Mammary epithelial cell (primary cell): ENCODE measurements at regions of chr5 and their contacts with region 1.

Region 1: GRCh38 chr5:42889311-42889933 is 77.7 kb upstream of the SELENOP start:
- DNase-seq: peak; percentile 65
- H3K4me3 ChIP-seq: no peak overlapping the region
- H3K27ac ChIP-seq: no peak overlapping the region
- H3K4me1 ChIP-seq: no peaks in the 10 kb centered on the region
- H3K27me3 ChIP-seq: no peaks in the 10 kb centered on the region
- CTCF ChIP-seq: peak; percentile 94 to 96

Region 2: DNA sequence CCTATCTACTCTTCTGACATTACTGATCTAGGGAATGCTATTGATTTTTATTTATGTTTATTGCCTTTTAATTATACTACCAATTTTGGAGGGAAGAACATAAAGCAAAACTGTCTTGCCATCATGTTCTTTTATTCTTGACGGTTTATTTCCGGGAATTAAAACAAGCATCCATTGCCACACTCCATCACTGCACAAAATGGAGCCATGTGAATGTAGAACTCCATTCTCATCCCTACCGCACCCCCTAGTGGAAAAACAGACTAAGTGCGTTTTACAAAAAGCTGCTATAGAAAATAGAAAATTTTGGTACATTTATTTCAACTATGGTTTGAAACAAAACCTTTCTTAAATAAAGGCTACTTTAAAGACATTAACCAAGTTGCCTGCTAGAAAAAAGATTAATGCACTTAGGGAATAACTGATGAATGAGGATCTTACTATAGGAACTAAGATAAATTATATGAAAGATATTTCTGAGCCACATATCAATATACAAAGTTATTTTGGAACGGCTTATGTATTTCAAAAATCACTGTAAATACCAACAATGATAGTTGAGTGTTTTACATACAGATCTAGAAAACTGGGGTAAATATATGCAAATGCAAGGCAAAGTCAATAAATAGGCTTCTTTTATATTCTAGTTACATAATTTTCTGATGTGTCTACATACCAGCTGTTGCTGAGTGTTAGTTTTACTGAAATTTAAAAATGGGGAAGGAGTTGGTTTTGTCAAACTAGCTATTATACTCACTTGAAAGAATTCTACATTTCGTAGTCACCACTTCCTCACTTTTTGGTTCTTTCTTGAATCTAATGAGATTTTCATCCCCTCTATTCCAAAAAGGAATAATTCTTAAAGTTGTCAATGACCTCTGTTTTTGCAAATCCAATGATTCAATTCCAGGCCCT is 1045.7 kb before region 1 on chr5:
- CTCF ChIA-PET with region 1: interaction called, 12 read pairs
- dilution Hi-C with region 1: no loop called
- in situ Hi-C with region 1: no loop called
- intact Hi-C with region 1: no loop called
- DNase-seq: peak; percentile 37
- H3K4me3 ChIP-seq: no peak overlapping the region
- H3K27ac ChIP-seq: no peak overlapping the region
- H3K4me1 ChIP-seq: no peaks in the 10 kb centered on the region
- H3K27me3 ChIP-seq: no peaks in the 10 kb centered on the region
- CTCF ChIP-seq: peak; percentile 69 to 79

Region 3: DNA sequence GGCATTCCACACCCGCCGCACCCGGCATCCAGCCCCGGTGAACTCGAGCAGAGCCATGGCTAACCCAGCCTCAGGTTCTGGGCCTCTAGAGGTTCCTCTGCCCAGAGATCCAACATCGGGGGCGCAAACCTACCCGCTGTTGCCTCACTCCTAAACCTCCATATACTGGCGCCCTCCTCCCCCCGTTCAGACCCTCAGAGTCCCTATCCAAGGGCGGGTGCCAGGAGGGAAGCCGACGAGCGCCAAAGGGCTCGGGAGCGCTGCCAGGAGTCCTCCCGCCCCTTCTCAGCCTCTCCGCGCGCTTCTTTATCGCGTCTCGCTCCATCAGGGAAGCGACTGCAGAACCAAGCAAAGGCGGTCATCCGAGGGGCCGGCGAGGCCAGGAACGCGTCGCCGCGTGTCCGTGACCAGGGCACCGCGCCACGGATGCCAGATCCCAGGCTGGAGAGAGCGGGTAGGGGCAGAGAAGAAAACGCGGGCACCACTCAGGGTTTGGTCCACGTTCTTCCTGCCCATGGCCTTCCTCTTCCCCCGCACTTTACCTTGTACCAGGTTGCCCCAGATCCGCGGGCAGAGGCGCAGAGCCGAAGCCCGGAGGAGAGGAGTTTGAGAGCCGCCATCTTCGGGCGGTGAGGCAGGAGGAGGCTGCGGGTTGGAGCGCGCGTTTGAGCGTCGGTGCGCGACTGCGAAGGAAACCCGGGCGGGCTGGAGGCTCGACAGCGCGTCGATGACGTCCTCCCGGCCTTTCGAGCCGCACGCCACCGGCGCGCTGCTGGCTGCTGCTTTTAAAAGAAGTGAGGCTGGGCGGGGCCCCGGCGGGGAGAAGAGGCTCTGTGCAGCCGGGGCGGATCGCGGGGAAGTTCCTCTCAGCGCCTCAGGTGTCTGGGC is 1019.4 kb before region 1 on chr5 and contains the start of gene OXCT1:
- CTCF ChIA-PET with region 1: no interaction called
- dilution Hi-C with region 1: no loop called
- in situ Hi-C with region 1: loop called in 1 of 2 experiments (anchors 25 kb)
- intact Hi-C with region 1: no loop called
- DNase-seq: peak; percentile 91
- H3K4me3 ChIP-seq: peak within 1 kb of the TSS; percentile 67 to 92 (median 83)
- H3K27ac ChIP-seq: peak within 1 kb of the TSS; percentile 70
- H3K4me1 ChIP-seq: peaks cover 21% of the 10 kb centered on the region
- H3K27me3 ChIP-seq: no peaks in the 10 kb centered on the region
- CTCF ChIP-seq: no peak
- total RNA-seq, gene OXCT1: 18.2 to 36.4 TPM

Region 4: DNA sequence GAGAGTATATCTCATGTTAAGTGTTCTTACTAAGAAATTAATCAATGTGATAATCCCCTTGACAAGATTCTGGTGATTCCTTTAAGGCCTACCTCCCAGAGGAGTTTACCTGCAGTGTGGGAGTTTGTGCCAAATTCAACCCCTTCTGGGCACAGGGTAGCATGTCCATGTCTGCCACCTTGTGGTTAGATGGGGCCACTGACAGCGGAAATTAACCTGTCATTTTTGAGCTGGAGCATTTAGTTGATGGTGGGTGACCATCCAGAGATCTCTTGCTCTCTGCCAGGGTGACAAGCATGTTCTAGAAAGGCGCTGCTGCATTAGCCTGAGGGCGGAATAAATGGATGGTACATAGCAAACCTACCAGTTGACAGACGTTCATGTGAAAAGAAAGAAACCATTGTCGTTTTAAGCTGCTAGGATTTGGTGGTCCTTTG is 832.1 kb before region 1 on chr5:
- CTCF ChIA-PET with region 1: no interaction called
- dilution Hi-C with region 1: no loop called
- in situ Hi-C with region 1: no loop called
- intact Hi-C with region 1: loop called (anchors 5 kb)
- DNase-seq: peak; percentile 38
- H3K4me3 ChIP-seq: no peak overlapping the region
- H3K27ac ChIP-seq: no peak overlapping the region
- H3K4me1 ChIP-seq: peaks cover 16% of the 10 kb centered on the region
- H3K27me3 ChIP-seq: no peaks in the 10 kb centered on the region
- CTCF ChIP-seq: peak; percentile 84

Region 5: DNA sequence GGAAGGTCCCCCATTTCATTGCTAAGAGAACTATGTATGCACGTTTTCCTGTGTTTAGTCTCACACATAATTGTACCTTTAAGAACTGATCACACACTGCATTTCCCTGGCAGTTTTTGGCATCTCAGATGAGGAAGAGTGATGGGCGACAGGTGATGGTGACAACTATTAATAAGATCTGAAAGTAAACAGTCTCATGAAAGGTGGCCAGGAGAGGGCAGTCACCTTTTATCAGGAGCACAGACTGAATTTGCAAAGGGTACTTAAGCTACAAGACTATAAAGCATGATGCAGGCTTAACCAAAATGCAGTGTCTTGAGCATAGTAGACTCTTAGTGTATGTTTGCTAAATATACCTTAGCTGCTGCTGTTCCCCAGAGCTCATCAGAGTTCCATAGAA is 374.7 kb before region 1 on chr5:
- CTCF ChIA-PET with region 1: no interaction called
- dilution Hi-C with region 1: no loop called
- in situ Hi-C with region 1: no loop called
- intact Hi-C with region 1: loop called (anchors 5 kb)
- DNase-seq: peak; percentile 7
- H3K4me3 ChIP-seq: no peak overlapping the region
- H3K27ac ChIP-seq: no peak overlapping the region
- H3K4me1 ChIP-seq: no peaks in the 10 kb centered on the region
- H3K27me3 ChIP-seq: no peaks in the 10 kb centered on the region
- CTCF ChIP-seq: peak; percentile 30 to 56

Region 6: GRCh38 chr5:42656651-42657015 is 232.8 kb before region 1 on chr5:
- CTCF ChIA-PET with region 1: interaction called, 4 read pairs
- dilution Hi-C with region 1: no loop called
- in situ Hi-C with region 1: no loop called
- intact Hi-C with region 1: loop called (anchors 10 kb)
- DNase-seq: peak; percentile 4
- H3K4me3 ChIP-seq: peak overlapping the region; percentile 2 to 64 (median 45)
- H3K27ac ChIP-seq: peak overlapping the region; percentile 53
- H3K4me1 ChIP-seq: peaks cover 10% of the 10 kb centered on the region
- H3K27me3 ChIP-seq: no peaks in the 10 kb centered on the region
- CTCF ChIP-seq: peak; percentile 19 to 48